Ovary (tissue), 10 donors: ENCODE measurements at regions of chr11 and their contacts with region 1.

Region 1: GRCh38 chr11:120511116-120511819 is at the start of gene GRIK4:
- DNase-seq: peak; percentile 84 to 93 (median 91)
- H3K4me3 ChIP-seq: peak within 1 kb of the TSS; percentile 48
- H3K27ac ChIP-seq: peak within 1 kb of the TSS; percentile 21 to 64
- H3K4me1 ChIP-seq: peaks cover 4% of the 10 kb centered on the region
- H3K27me3 ChIP-seq: no peaks in the 10 kb centered on the region
- CTCF ChIP-seq: peak; percentile 93 to 97 (median 95)
- EP300 ChIP-seq: no peak
- POLR2A ChIP-seq: peak; percentile 19
- total RNA-seq, gene GRIK4: 1.4 to 13.4 (median 5.4) TPM

Region 2: GRCh38 chr11:120554766-120555432 is 43.6 kb after region 1 on chr11:
- intact Hi-C with region 1: no loop called
- DNase-seq: peak in 1 of 5 donors; percentile 46
- H3K4me3 ChIP-seq: no peak overlapping the region
- H3K27ac ChIP-seq: peak overlapping the region in 1 of 2 donors; percentile 52
- H3K4me1 ChIP-seq: peaks cover 17% of the 10 kb centered on the region
- H3K27me3 ChIP-seq: no peaks in the 10 kb centered on the region
- CTCF ChIP-seq: no peak
- EP300 ChIP-seq: no peak
- POLR2A ChIP-seq: no peak

Region 3: DNA sequence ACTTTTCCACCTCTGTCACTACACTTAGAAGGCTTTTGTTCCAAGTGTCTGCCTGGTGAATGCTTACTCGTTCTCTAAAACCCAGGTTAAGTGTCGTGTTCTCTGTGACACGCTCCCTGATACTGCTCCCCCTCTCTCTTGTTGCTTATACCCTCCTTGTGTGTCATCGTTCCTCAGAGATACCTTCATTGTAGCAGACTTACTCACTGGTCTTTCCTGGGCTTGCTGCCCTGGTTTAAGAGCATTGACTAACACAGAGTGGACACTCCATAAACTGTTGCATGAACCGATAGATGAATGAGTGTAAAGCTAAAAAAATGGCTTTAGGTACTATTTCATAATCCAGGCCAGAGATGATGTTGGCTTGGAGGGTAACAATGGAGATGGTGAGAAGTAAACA is 171.6 kb after region 1 on chr11:
- intact Hi-C with region 1: loop called (anchors 2 to 5 kb)
- DNase-seq: no peak
- H3K4me3 ChIP-seq: no peak overlapping the region
- H3K27ac ChIP-seq: no peak overlapping the region
- H3K4me1 ChIP-seq: peaks cover 2% of the 10 kb centered on the region
- H3K27me3 ChIP-seq: no peaks in the 10 kb centered on the region
- CTCF ChIP-seq: no peak
- EP300 ChIP-seq: no peak
- POLR2A ChIP-seq: no peak

Region 4: DNA sequence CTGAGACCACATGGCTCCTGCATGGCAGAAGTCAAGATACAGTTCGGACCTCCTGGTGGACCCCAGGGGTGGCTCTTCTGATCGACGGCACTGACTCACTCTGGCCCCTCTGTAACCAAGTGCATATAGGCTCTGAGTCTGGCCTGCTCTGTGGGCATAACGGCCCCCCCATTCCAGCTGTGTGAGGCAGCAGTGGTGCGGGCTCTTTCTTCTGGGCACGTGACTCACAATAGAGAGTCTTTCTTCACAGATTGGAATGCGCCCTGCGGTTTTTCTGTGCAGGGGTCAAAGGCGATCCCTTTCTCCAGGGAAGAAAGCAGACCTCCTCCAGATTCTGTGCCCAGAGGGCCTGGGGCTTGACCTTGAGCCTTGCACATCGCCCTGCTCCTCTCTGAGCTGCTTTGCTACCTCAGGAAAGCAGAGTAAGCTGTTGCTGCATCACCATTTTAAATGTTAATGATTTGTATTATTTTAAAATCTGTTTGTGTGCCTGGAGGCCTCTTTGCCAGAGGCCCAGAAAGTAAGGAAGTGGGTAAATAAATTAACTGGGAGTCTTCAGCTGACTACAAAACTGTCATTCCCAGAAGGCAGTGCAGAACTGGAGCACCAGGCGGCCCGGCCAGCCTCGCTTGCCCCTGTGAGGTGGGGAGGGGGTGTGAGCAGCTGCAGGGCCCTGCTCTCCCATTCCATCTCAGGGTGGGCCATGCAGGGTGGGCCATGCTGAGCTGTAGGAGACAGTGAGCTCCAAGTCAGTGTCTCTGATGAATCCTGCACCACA is 199.3 kb after region 1 on chr11:
- intact Hi-C with region 1: loop called in 1 of 4 experiments (anchors 10 kb)
- DNase-seq: peak; percentile 81 to 91 (median 86)
- H3K4me3 ChIP-seq: no peak overlapping the region
- H3K27ac ChIP-seq: peak overlapping the region; percentile 3 to 83
- H3K4me1 ChIP-seq: peaks cover 28% of the 10 kb centered on the region
- H3K27me3 ChIP-seq: no peaks in the 10 kb centered on the region
- CTCF ChIP-seq: no peak
- EP300 ChIP-seq: no peak
- POLR2A ChIP-seq: no peak

Region 5: GRCh38 chr11:120817158-120817557 is 305.9 kb after region 1 on chr11:
- intact Hi-C with region 1: loop called in 1 of 4 experiments (anchors 10 kb)
- DNase-seq: no peak
- H3K4me3 ChIP-seq: no peak overlapping the region
- H3K27ac ChIP-seq: no peak overlapping the region
- H3K4me1 ChIP-seq: peaks cover 4% of the 10 kb centered on the region
- H3K27me3 ChIP-seq: no peaks in the 10 kb centered on the region
- CTCF ChIP-seq: no peak
- EP300 ChIP-seq: no peak
- POLR2A ChIP-seq: no peak

Region 6: GRCh38 chr11:121112498-121113455 is 601.5 kb after region 1 on chr11:
- intact Hi-C with region 1: loop called in 2 of 4 experiments (anchors 5 to 10 kb)
- DNase-seq: peak; percentile 58 to 75 (median 65)
- H3K4me3 ChIP-seq: no peak overlapping the region
- H3K27ac ChIP-seq: no peak overlapping the region
- H3K4me1 ChIP-seq: no peaks in the 10 kb centered on the region
- H3K27me3 ChIP-seq: no peaks in the 10 kb centered on the region
- CTCF ChIP-seq: peak; percentile 26 to 65 (median 54)
- EP300 ChIP-seq: no peak
- POLR2A ChIP-seq: no peak

Region 7: GRCh38 chr11:121194731-121195596 is 683.7 kb after region 1 on chr11:
- intact Hi-C with region 1: loop called in 3 of 4 experiments (anchors 10 kb)
- DNase-seq: peak in 4 of 5 donors; percentile 22 to 56 (median 30)
- H3K4me3 ChIP-seq: no peak overlapping the region
- H3K27ac ChIP-seq: no peak overlapping the region
- H3K4me1 ChIP-seq: no peaks in the 10 kb centered on the region
- H3K27me3 ChIP-seq: no peaks in the 10 kb centered on the region
- CTCF ChIP-seq: peak; percentile 66 to 67 (median 66)
- EP300 ChIP-seq: no peak
- POLR2A ChIP-seq: no peak